Activated CD8-positive, alpha-beta T cell treated with anti-CD3 and anti-CD28 coated beads for 36 hours (primary cell): ENCODE measurements at regions of chr14 and their contacts with region 1.

Region 1: DNA sequence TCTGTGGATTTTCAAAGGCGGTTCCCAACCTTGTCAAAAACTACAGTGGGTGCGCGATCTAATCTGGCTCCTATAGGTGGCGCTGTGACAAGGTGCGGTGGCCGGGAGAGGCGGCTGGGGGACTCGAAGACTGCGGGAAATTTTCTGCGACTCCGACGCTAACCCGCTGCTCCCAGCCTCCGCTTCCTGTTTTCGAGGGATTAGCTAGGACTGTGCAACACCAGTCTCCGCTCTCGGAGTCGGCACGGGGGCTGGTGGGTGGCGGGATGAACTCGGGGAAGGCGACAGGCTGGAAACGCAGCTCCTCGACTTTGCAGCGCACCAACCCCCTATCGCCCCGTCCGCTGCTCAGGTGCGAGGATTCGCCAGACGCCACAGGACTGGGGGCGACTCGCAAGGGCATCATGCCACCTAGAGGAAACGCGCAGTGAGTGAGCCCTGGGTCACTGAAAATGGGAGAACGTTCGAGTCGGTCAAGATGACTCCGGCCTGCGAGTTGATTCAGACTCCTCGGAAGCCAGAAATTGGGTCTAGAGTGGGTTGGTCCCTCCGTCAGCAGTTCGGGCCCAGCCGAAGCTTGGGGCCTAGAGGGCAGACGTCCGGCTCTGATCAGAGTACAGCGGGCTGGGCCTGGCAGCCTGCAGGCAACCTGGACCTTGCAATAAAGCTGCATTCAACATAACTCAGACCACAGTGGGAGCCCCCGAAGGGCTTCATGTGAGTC is 5.5 kb upstream of the PAX9 start:
- DNase-seq: peak; percentile 55
- ATAC-seq: peak; percentile 55
- H3K4me3 Mint-ChIP-seq: no peak overlapping the region
- H3K27ac Mint-ChIP-seq: no peak overlapping the region
- H3K4me1 Mint-ChIP-seq: peaks cover 18% of the 10 kb centered on the region
- H3K27me3 Mint-ChIP-seq: peaks cover 84% of the 10 kb centered on the region
- CTCF ChIP-seq: peak; percentile 53

Region 2: GRCh38 chr14:36505181-36505815 is 150.8 kb before region 1 on chr14:
- CTCF ChIA-PET with region 1: no interaction called
- POLR2A ChIA-PET with region 1: no interaction called
- intact Hi-C with region 1: loop called (anchors 5 kb)
- DNase-seq: no peak
- ATAC-seq: peak; percentile 42
- H3K4me3 Mint-ChIP-seq: no peak overlapping the region
- H3K27ac Mint-ChIP-seq: no peak overlapping the region
- H3K4me1 Mint-ChIP-seq: peaks cover 9% of the 10 kb centered on the region
- H3K27me3 Mint-ChIP-seq: peaks cover 72% of the 10 kb centered on the region
- CTCF ChIP-seq: no peak

Region 3: DNA sequence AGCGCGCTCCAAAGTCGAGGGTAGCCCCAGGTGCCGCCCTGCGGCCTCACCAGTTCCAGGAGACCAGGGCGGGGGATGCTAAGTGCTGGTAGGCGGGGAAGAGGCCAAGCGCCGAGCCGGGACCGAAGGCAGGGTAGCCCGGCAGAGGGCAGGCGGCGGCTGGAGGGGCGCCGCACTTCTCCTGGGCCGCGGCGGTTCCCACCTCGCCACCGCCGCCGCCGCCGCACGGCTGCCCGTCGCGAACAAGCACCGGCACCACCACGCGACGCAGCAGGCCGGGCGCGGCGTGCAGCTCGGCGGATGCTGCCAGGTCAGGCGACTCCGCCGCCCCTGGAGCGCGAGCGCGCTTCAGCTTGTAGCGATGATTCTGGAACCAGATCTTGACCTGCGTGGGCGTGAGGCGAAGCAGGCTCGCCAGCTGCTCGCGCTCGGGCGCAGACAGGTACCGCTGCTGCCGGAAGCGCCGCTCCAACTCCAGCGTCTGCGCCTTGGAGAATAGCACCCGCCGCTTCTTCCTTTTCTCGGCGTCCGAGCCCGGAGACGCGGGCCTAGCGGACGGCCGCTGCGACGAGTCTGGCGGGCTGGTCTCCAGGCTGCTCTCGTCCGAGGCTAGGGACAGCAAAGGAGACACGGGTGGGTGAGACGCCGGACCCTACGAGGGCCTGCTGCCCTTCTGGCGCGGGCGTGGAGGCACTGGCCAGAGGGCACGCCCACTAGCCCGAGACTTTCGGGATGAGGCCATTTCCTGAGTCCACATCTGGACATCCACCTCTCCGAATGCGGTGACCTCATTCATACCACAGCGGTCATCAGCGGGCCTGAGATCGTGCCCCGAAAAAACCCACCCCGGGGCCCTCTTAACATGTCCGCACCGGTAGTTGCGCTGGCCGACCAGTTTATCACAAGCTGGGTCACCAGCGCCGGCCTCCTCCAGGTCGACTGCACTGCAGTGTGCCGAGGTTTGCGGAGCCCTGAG is 75.0 kb before region 1 on chr14:
- CTCF ChIA-PET with region 1: no interaction called
- POLR2A ChIA-PET with region 1: no interaction called
- intact Hi-C with region 1: loop called (anchors 5 kb)
- DNase-seq: peak; percentile 43
- ATAC-seq: no peak
- H3K4me3 Mint-ChIP-seq: no peak overlapping the region
- H3K27ac Mint-ChIP-seq: no peak overlapping the region
- H3K4me1 Mint-ChIP-seq: no peaks in the 10 kb centered on the region
- H3K27me3 Mint-ChIP-seq: peaks cover 59% of the 10 kb centered on the region
- CTCF ChIP-seq: no peak

Region 4: DNA sequence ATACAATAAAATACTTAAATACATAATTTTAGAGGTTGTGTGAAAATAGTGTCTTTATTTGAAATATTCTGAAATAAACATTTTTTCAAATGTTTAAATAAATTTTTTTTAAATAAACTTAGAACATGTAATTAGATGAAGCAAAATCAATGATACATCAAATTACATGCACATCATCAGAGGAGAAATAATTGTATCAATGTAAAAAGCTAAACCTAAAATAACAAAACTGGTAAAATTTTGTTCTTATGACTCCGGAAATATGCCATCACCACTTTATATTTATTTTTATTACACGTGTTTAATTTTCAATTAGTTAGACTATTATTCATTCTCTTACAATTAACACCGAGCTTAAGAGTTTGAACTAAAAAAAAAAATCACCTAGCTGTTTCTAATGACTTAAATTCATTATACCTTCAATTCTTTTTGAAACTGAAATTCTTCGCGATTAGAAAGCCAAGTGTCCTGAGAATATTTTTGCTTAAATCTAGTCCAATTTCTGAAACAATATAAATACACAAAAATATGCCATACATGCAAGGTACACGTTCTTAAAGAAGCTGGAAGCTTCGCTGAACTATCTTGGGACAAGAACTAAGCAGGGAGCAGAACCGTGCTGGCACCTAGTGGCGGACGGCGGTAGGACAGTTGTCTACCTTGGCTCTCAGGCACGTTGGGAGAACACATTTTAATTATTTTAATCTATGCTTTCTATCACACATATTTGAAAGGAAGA is 285.8 kb after region 1 on chr14:
- CTCF ChIA-PET with region 1: no interaction called
- POLR2A ChIA-PET with region 1: no interaction called
- intact Hi-C with region 1: loop called (anchors 10 kb)
- DNase-seq: peak; percentile 79
- ATAC-seq: peak; percentile 67
- H3K4me3 Mint-ChIP-seq: no peak overlapping the region
- H3K27ac Mint-ChIP-seq: no peak overlapping the region
- H3K4me1 Mint-ChIP-seq: no peaks in the 10 kb centered on the region
- H3K27me3 Mint-ChIP-seq: peaks cover 3% of the 10 kb centered on the region
- CTCF ChIP-seq: peak; percentile 96

Region 5: DNA sequence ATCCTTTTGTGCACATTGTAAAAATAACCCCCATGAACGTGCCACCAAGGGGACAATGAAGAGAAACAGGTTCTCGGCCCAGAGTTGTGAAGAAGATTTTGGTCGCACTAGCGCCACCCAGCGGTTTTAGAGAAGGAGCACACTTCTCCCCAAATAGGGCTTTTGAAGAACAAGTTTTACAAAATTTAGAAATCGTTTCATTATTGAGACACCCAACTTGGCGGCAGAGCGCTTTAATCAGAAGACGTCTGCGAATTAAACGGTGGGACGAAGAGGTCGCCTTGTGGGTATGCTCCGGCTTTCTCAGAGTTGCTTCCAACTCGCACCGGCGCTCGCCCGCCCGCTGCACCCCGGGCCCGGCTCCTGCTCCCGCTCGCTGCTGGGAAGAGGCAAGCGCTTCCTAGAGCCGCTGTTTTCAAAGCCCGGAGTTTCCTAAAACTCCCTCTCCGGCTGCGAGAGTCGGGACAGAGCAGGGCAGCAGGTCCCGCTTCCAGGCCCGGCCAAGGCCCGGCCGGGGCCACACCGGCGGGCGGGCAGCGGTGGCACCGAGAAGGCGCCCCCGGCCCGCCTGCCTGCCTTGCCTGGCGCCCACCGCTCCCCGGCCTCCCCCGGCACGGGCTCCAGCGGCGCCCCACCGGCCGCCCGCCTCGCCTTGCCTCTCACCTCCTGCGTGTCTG is 938.3 kb after region 1 on chr14:
- CTCF ChIA-PET with region 1: no interaction called
- POLR2A ChIA-PET with region 1: no interaction called
- intact Hi-C with region 1: loop called (anchors 10 kb)
- DNase-seq: peak; percentile 61
- ATAC-seq: no peak
- H3K4me3 Mint-ChIP-seq: peak overlapping the region; percentile 53
- H3K27ac Mint-ChIP-seq: peak overlapping the region; percentile 66
- H3K4me1 Mint-ChIP-seq: peaks cover 16% of the 10 kb centered on the region
- H3K27me3 Mint-ChIP-seq: peaks cover 72% of the 10 kb centered on the region
- CTCF ChIP-seq: peak; percentile 66